ENCODE measurements at regions of chr9 and their contacts with region 1.

Region 1: GRCh38 chr9:74478606-74479005 is 18.5 kb upstream of the RORB start:
- DNase-seq: no peak
- ATAC-seq: no peak
- H3K4me3 ChIP-seq: no peak overlapping the region
- H3K27ac ChIP-seq: no peak overlapping the region
- H3K4me1 ChIP-seq: no peaks in the 10 kb centered on the region
- H3K27me3 ChIP-seq: no peaks in the 10 kb centered on the region
- CTCF ChIP-seq: no peak

Region 2: DNA sequence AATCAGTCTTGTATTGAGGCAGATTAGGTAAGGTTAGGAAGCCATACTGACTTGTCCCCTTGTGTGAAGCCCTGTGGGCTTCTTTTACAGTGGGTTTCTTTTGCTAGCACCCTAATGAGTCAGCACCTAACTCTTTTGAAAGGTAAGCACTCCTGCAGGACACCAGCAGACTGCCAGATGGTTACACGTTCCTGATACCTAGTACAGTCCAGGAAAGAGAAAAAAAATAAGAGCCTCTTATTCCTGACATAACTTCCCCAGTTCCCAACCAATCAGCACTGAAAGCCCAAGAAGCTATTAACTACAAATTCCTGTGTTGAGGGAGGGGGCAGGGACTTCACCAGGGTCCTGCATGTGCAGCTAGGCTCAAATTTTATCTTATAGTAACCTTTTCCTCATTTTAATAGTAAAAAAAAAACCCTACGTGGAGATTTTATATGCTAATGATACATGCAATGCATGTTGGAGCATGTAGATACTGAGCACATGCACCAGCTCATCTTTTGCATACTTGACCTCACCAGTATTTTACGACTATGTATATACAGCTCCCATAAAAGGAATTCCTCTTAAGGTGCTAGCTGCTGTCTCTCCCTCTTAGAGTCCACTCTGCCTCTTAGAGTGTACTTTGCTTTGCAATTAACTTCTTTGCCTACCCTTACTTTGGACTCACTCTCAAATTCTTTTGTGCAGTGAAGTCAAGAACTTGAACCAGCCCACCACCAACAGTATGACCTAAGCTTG is 66.2 kb before region 1 on chr9:
- intact Hi-C with region 1: loop called in 1 of 3 experiments (anchors 10 kb)
- DNase-seq: no peak
- ATAC-seq: no peak
- H3K4me3 ChIP-seq: no peak overlapping the region
- H3K27ac ChIP-seq: no peak overlapping the region
- H3K4me1 ChIP-seq: no peaks in the 10 kb centered on the region
- H3K27me3 ChIP-seq: no peaks in the 10 kb centered on the region
- CTCF ChIP-seq: no peak

Region 3: DNA sequence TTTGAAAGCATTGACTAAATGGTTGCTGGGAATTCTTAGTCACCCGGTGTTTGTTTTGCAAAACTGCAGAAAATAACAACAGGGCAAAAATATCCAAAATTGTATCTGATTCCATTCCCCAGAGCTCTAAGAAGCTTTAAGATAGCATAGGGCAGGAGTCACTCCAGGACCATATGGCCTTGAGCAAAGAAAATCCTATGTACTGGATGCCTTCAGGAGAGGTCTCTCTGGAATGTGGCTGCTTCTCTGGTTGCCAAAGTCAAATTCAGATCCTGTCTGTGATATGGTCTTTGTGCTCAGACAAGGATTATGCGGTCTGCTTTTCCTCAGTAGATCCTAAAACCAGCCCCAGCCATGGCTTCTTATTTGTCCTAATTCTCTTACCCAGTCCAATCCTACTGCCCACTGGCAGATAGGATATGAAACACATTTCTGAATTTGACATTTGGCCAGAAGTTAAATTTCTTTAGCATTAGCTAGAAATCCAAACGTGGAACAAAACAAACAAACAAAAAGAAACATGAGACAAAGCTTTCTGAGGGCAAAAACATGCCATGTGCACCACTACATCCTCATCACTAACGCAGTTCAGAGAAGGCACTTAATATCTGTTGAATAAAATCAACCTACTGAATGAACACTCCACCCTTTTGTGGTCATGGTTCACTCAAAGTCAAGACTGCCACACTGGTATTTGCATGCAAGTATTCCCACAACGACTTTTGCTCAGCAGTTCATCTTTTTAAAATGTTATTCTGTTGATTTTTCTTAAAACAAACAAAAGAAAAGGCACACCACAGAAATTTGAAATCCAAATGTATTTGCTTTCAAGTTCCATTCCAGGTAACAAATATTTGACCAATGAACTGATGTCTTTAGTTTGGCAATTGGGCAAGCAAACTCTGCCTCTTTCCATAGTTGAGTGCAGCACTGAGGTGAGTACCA is 243.4 kb after region 1 on chr9:
- intact Hi-C with region 1: no loop called
- DNase-seq: no peak
- ATAC-seq: no peak
- H3K4me3 ChIP-seq: no peak overlapping the region
- H3K27ac ChIP-seq: no peak overlapping the region
- H3K4me1 ChIP-seq: no peaks in the 10 kb centered on the region
- H3K27me3 ChIP-seq: no peaks in the 10 kb centered on the region
- CTCF ChIP-seq: no peak

Measured in pancreas (tissue), 10 donors.